ENCODE measurements at regions of chr17 and their contacts with region 1.

Region 1: DNA sequence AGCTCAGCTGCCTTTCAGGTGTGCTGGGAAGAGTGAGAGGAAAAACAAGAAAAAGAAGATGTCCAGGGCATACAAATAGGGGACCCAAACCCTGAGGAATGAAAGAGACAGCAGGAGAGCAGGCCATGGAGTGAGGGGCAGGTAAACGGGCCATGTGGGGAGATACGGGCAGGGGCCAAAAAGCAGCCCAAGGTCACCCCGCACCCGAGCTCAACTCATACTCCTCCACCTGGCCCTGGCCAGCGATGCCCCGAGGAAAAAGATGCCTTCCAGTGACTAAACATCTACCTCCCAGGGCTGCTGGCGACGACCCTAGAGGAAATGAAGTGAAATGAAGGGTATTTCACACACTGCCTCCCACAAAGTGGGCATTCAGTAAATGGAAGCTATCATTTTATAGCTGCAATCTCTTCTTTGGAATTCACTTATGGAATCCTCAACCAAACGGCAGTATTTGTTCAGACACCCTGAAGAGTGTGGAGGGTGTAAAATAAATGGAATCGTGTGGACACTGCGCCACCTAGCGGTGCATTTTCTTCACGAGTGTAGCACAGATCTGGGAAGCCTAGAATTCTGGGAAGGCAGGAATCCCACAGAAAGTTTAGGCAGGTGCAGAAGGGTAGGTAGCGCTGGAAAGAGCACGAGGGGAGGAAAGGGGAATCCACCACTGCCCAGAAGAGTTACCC is 14.9 kb downstream of the ELAC2 start:
- H3K4me3 ChIP-seq: no peak overlapping the region
- H3K27ac ChIP-seq: no peak overlapping the region
- H3K4me1 ChIP-seq: peaks cover 2% of the 10 kb centered on the region; the same call in 1 of the 2 replicates
- CTCF ChIP-seq: peak; percentile 65

Region 2: DNA sequence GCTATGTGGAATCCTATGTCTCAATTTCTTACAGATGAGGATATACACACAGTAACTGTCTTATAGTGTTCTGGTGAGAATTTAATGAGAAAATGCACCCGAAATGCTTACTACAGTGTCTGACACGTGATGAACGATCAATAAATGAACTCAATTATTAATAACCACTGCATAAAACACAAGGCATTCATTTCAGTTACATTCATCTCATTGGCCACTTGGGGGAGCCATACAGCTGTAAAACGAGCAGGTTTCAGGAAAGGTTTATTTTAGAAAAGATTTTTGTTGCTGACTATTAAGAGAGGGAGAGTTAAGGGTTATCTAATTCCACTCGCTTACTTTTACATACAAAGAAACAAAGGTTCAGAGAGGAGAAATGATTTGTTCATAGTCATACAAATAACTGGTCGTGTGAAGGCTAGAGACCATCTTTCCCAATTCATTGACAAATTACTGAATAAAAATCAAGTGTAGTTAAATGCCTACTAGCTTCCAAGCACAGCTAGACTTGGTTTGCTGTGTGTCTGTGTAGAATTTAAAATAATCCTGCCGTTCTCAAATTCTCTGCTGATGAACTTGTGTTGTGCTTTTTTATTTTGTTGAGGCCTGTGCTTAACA is 822.2 kb before region 1 on chr17:
- CTCF ChIA-PET with region 1: interaction called, 19 read pairs
- POLR2A ChIA-PET with region 1: no interaction called
- H3K4me3 ChIP-seq: no peak overlapping the region
- H3K27ac ChIP-seq: no peak overlapping the region
- H3K4me1 ChIP-seq: no peaks in the 10 kb centered on the region
- CTCF ChIP-seq: peak; percentile 22; the same call in 1 of the 2 replicates

Region 3: GRCh38 chr17:12256380-12256995 is 746.4 kb before region 1 on chr17:
- CTCF ChIA-PET with region 1: interaction called, 48 read pairs
- POLR2A ChIA-PET with region 1: no interaction called
- H3K4me3 ChIP-seq: no peak overlapping the region
- H3K27ac ChIP-seq: no peak overlapping the region
- H3K4me1 ChIP-seq: no peaks in the 10 kb centered on the region
- CTCF ChIP-seq: peak; percentile 25; the same call in 1 of the 2 replicates

Region 4: GRCh38 chr17:12983991-12984884 is 18.7 kb before region 1 on chr17:
- CTCF ChIA-PET with region 1: interaction called, 15 read pairs
- POLR2A ChIA-PET with region 1: no interaction called
- H3K4me3 ChIP-seq: no peak overlapping the region
- H3K27ac ChIP-seq: no peak overlapping the region
- H3K4me1 ChIP-seq: no peaks in the 10 kb centered on the region
- CTCF ChIP-seq: no peak

Region 5: DNA sequence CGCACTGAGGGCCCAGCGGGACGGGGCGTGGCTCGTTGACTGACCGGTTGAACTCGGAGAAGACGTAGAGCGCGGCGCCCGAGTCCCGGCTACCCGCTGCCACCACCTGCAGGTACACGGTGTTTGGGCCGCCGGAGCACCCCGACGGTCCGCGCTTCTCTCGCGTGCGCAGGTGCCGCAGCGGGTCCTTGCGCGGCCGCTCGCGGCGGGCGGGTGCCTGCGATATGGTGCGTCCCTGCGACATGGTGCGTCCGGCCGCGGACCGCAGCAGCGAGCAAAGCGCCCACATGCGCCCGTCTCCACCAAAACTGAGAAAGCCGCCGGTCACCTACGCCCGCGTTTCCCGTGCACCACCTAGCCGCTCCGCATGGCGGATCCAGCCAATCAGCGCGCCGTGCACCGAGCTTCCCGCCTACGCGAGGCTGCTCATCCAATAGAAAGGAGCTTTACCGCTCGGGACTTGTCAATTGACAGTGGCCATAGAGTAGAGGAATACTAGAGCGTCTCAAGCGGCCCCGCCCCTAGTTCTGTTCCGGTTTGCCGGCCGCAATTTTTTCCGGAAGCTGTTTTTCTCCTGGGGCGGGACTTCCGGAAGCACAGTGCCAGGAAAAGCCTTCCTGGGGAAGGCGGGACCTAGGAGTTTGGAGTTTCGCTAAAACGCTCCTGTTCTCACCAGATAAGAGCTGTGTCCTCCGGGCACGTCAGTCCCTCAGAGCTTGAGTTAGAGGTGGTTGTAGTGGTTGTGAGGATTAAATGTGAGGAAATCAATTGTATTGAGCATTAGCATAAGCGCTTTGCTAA is 14.9 kb after region 1 on chr17 and contains the start of gene ELAC2:
- CTCF ChIA-PET with region 1: interaction called, 20 read pairs
- POLR2A ChIA-PET with region 1: interaction called, 16 read pairs
- H3K4me3 ChIP-seq: peak within 1 kb of the TSS; percentile 81
- H3K27ac ChIP-seq: peak within 1 kb of the TSS; percentile 78
- H3K4me1 ChIP-seq: peaks cover 6% of the 10 kb centered on the region; the same call in 1 of the 2 replicates
- CTCF ChIP-seq: peak; percentile 82

Region 6: DNA sequence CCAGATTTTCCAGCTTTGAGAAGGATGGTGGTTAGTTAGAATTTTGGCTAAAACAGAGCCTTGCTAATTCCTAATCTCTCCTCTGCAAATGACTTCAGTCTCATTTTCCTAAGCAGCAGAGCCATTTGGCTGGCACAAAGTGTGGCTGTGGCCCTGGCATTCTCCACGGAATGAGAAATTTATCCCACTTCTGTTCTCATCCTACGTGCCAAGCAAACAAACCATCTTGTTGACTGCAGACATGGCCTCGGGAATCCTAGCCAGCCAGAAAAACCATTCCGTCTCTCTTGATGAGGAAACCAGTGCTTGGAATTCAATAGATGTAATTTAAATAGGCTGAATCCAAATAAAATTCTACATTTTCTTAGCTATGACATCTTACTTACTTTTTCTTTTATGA is 49.0 kb after region 1 on chr17:
- CTCF ChIA-PET with region 1: no interaction called
- POLR2A ChIA-PET with region 1: no interaction called
- H3K4me3 ChIP-seq: no peak overlapping the region
- H3K27ac ChIP-seq: no peak overlapping the region
- H3K4me1 ChIP-seq: no peaks in the 10 kb centered on the region; the same call in 1 of the 2 replicates
- CTCF ChIP-seq: no peak

Region 7: GRCh38 chr17:13086142-13086769 is 83.3 kb after region 1 on chr17:
- CTCF ChIA-PET with region 1: no interaction called
- POLR2A ChIA-PET with region 1: no interaction called
- H3K4me3 ChIP-seq: no peak overlapping the region
- H3K27ac ChIP-seq: no peak overlapping the region
- H3K4me1 ChIP-seq: no peaks in the 10 kb centered on the region
- CTCF ChIP-seq: no peak